A549 (cell line): ENCODE measurements at regions of chr15 and their contacts with region 1.

Region 1: DNA sequence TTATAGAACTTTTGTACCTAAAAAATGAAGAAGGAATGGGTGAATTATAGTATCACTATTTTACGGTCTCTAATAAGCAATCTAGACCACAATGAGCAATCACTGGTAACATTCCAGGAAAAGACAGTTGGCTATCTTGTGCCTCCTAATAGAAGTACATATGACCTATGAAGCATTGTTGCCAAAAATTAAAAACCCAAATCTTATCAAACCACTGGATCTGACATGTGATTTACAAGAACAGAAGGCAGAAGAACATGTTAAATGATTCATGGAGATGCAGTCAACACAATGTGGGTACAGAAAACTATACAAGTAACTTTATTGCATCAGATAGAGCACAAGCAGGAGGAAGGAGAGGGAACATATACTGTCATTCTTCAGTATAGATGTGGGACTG is 14.5 kb upstream of the HYKK start:
- DNase-seq: no peak
- ATAC-seq: no peak
- H3K4me3 ChIP-seq: no peak overlapping the region
- H3K27ac ChIP-seq: no peak overlapping the region
- H3K4me1 ChIP-seq: peaks cover 12% of the 10 kb centered on the region; the same call in 2 of the 3 replicates
- CTCF ChIP-seq: no peak
- EP300 ChIP-seq: no peak
- POLR2A ChIP-seq: no peak
- RAD21 ChIP-seq: no peak

Region 2: DNA sequence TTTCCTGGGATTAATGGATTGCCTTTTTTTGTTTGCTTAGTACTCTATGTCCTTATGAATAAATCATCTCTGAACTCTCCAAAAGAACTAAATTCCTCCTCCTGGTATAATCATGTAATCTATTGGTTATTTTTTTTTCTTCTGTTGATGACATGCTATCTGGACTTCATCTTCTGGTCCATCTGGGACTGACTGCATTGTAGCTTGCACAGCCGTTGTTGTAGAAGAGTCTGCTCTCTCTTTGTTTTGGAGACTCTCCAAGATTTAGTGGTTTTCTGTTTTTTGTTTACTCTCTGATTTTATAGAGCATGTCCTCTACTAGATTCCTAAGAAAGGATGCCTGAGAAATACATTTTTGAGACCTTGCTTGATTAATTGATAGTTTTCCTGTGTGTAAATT is 35.8 kb before region 1 on chr15:
- CTCF ChIA-PET with region 1: no interaction called
- POLR2A ChIA-PET with region 1: no interaction called
- DNase-seq: peak; percentile 21 to 45
- ATAC-seq: peak in 1 of 2 experiments; percentile 79; a peak in 3 of 6 replicates
- H3K4me3 ChIP-seq: no peak overlapping the region
- H3K27ac ChIP-seq: no peak overlapping the region; a peak in 1 of 6 replicates
- H3K4me1 ChIP-seq: peaks cover 54% of the 10 kb centered on the region
- CTCF ChIP-seq: no peak
- EP300 ChIP-seq: no peak
- POLR2A ChIP-seq: no peak
- RAD21 ChIP-seq: no peak

Region 3: DNA sequence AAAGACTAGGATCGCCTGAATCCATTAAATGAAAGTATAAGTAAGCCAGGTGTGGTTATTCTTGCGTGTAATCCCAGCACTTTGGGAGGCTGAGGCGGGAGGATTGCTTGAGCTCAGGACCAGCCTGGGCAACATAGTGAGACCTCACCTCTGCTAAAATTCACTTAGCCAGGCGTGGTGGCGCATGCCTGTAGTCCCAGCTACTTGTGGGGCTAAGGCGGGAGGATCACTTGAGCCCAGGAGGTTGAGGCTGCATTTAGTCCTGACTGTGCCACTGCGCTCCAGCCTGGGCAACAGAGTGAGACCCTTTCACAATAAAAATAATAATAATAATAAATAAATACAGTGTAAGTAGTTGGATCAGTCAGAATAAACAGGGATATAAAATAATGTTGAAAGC is 11.0 kb before region 1 on chr15:
- CTCF ChIA-PET with region 1: interaction called, 16 read pairs
- POLR2A ChIA-PET with region 1: no interaction called
- DNase-seq: no peak
- ATAC-seq: peak; percentile 29 to 44; a peak in 4 of 6 replicates
- H3K4me3 ChIP-seq: no peak overlapping the region
- H3K27ac ChIP-seq: no peak overlapping the region
- H3K4me1 ChIP-seq: no peaks in the 10 kb centered on the region
- CTCF ChIP-seq: no peak
- EP300 ChIP-seq: no peak
- POLR2A ChIP-seq: no peak
- RAD21 ChIP-seq: no peak

Region 4: GRCh38 chr15:78527325-78527724 is 34.5 kb after region 1 on chr15:
- CTCF ChIA-PET with region 1: no interaction called
- POLR2A ChIA-PET with region 1: interaction called, 12 read pairs
- DNase-seq: no peak
- ATAC-seq: no peak
- H3K4me3 ChIP-seq: no peak overlapping the region
- H3K27ac ChIP-seq: no peak overlapping the region
- H3K4me1 ChIP-seq: no peaks in the 10 kb centered on the region
- CTCF ChIP-seq: no peak
- EP300 ChIP-seq: no peak
- POLR2A ChIP-seq: no peak
- RAD21 ChIP-seq: no peak

Region 5: GRCh38 chr15:78537266-78537905 is 44.5 kb after region 1 on chr15:
- CTCF ChIA-PET with region 1: no interaction called
- POLR2A ChIA-PET with region 1: no interaction called
- DNase-seq: no peak
- ATAC-seq: no peak
- H3K4me3 ChIP-seq: no peak overlapping the region
- H3K27ac ChIP-seq: no peak overlapping the region
- H3K4me1 ChIP-seq: peaks cover 10% of the 10 kb centered on the region
- CTCF ChIP-seq: no peak
- EP300 ChIP-seq: no peak
- POLR2A ChIP-seq: no peak
- RAD21 ChIP-seq: no peak